ENCODE measurements at regions of chr6 and their contacts with region 1.

Region 1: DNA sequence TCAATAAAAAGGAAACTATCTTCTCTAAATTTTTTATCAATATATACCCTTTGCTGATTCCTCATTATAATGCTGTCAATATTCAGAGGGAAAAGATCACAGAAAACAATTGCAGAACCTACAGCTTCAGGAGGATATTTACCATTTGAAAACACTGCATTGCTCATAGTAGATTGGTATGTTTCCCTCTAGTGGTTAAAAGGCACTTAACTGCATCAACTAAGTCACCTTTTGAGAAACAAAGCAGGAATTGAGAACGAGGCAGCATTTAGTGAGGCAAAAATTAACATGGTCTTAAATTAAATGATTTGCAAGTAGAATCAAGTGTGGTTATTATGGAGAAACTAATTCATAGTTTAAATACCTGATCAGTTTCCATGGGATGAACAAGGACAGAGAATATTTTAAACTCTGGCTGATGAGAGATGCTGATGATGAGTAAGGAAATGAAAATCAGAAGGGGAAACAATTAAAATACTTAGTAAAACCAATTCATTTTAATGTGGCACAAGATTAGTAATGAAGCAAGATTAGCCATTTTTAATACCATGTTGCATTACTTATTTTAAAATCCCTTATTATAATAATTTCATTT is 642.1 kb downstream of the EPHA7 start:
- DNase-seq: no peak
- H3K4me3 ChIP-seq: no peak overlapping the region
- H3K27ac ChIP-seq: no peak overlapping the region
- H3K4me1 ChIP-seq: no peaks in the 10 kb centered on the region
- H3K27me3 ChIP-seq: no peaks in the 10 kb centered on the region
- CTCF ChIP-seq: peak; percentile 40

Region 2: DNA sequence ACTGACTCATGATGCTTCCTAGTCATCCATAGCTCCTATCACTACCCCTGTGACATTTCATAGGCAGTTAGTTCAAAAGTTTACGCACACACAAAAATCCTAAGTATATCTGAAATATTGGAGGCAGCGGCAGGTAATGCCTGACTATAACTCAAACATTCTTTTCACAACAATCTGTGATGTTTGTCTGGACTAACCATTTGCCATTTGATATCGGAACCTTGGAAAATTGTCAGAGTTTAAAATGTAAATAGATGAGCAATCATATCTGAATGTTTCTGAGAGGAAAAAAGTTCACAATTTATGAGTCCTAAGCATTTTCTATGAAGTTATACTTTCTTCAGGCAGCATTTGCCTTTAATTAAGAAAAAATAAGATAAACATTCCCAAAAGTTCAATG is 436.0 kb before region 1 on chr6:
- CTCF ChIA-PET with region 1: interaction called, 12 read pairs
- POLR2A ChIA-PET with region 1: no interaction called
- intact Hi-C with region 1: no loop called
- DNase-seq: no peak
- H3K4me3 ChIP-seq: no peak overlapping the region
- H3K27ac ChIP-seq: no peak overlapping the region
- H3K4me1 ChIP-seq: no peaks in the 10 kb centered on the region
- H3K27me3 ChIP-seq: no peaks in the 10 kb centered on the region
- CTCF ChIP-seq: no peak

Measured in PC-9 (cell line).